RWPE1 (cell line): ENCODE measurements at regions of chr17 and their contacts with region 1.

Region 1: DNA sequence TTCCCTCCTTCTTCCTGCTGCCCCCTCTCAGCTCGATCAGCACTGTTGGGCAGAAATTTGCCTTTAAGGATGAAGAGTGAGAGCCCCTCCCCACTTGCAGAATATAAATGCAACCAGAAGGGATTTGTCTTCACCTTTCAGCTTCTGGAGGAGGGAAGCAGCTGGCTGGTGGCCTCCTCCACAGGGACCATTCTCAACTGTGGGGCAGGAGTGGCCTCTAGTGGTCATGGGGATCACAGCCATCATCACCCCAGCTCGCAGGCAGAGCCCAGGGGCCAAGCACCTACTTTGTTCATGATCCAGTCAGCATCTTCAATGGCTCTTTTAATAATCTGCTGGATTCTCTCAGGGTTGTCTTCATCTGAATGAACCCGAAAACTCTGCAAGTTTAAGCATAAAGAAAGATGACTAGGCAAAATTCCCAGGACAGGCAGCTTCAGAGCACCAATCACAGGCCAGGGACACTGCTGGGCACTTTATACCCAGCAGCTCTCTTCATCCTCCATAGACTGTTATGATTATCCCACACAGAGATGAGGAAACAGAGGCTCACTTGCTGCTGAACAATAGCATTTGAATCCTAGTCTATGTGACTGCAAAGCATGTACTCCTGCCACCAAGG is 13.1 kb downstream of the LYRM9 start:
- DNase-seq: peak; percentile 85
- H3K27ac ChIP-seq: no peak overlapping the region
- CTCF ChIP-seq: peak; percentile 82

Region 2: DNA sequence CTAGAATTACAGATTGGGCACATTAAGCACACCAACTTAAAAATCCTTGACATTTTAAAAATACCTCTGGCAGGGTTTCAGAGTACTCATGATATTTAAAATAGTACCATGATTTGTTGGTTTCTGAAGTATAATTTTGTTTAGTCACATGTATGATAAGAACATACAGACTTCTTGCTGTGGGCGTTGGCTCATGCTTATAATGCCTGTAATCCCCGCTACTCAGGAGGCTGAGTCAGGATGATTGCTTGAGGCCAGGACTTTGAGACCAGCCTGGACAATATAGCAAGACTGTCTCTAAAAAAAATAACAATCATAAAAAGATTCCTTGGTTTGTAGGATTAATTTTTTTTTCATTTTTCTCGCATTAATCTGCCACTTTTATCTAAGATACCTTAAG is 158.3 kb before region 1 on chr17:
- CTCF ChIA-PET with region 1: interaction called, 11 read pairs
- POLR2A ChIA-PET with region 1: no interaction called
- DNase-seq: no peak
- H3K27ac ChIP-seq: no peak overlapping the region
- CTCF ChIP-seq: no peak

Region 3: GRCh38 chr17:27760069-27760885 is 119.8 kb before region 1 on chr17:
- CTCF ChIA-PET with region 1: interaction called, 45 read pairs
- POLR2A ChIA-PET with region 1: no interaction called
- DNase-seq: peak; percentile 33
- H3K27ac ChIP-seq: no peak overlapping the region
- CTCF ChIP-seq: peak; percentile 90

Region 4: DNA sequence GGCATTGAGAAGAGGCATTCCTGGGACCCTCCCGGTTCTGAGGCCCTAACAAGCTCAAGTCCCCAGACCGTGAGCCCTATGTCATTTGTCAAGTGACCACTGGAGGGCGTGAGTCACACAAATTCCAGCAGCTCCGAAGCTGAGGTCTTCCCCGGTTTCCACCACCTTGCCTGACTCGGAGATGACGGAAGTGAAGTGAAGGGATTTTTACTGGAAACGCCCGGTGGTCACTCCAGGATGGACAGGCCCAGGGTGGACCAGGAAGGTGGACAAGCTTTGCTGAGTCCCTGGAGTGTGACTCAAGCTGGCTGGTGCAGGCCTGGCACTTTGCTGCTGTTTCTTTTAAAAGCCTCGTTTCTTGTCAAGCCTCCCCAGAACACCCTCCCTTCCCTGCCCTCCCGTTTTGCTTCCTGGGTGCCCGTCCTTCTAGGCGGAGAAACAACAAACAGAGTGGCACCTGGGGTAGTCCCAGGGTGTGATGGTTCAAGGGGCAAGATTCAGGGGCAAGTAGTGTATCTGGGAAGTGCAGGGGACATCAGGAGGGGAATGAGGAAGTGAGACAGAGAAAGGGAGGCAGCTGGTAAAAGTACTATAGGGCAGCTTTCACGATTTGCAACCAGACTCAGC is 74.5 kb before region 1 on chr17:
- CTCF ChIA-PET with region 1: interaction called, 103 read pairs
- POLR2A ChIA-PET with region 1: interaction called, 3 read pairs
- DNase-seq: peak; percentile 83
- H3K27ac ChIP-seq: no peak overlapping the region
- CTCF ChIP-seq: peak; percentile 78

Region 5: GRCh38 chr17:27818401-27819105 is 61.5 kb before region 1 on chr17:
- CTCF ChIA-PET with region 1: no interaction called
- POLR2A ChIA-PET with region 1: no interaction called
- DNase-seq: no peak
- H3K27ac ChIP-seq: no peak overlapping the region
- CTCF ChIP-seq: no peak

Region 6: DNA sequence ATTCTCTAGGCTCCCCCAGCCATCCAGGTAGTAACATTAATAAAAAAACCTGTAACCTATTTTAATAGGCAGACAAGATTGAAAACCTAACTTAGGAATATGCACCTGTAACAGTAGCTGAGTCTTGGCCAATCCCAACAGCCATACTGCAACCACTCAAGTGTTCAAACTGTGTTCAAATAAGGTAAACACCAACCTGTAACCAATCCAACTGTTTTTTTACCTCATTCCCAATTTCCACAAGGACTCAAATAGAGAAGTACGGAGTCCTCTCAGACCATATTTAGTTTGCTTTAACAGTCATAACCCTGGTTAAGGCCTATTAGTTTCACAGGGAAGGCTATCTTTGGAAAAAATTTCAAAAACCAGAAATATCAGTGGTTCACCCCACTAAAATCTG is 39.4 kb before region 1 on chr17:
- CTCF ChIA-PET with region 1: no interaction called
- POLR2A ChIA-PET with region 1: no interaction called
- DNase-seq: no peak
- H3K27ac ChIP-seq: no peak overlapping the region
- CTCF ChIP-seq: no peak

Region 7: DNA sequence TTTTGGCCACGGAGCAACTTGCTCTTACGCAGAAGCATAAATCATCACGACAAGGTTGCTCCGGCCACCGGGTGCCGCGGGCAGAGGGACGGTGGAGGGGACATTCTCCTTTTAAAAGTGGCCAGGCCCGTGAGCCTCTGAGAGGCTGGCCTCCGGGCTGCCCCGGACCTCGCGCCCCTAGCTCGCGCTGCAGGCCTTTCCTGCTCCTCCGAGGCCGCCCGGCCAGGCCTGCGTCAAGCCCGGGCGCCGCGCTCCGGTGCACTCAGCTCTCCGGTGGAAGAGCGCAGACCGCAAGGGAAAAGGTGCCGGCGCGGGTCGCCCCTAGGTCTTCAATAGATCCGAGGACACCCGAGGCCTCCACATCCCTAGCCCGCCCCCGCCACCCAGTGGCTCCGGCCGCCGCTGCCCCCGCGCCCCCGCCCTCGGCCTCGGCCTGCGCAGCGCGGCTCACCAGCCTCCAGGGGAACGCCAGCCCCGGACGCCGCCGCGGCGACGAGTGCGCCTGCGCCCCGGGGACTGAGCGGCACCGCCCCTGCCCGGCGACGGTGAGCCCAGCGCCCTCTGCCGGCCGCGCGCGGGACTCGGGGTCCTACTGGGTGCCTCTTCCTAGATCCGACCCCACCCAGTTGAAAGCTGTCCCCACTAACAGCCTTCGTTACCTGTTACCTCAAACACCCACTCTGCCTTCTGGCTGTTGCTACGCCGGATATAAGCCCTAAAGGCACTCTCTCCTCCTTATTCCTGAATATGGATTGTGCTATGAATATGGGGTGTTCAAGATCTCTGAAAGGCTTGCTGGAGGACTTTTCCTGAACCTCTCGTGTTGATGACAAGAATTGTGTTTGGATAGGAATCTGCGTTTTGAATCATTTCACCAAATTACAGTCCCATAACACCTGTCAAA is 13.0 kb after region 1 on chr17 and contains the start of gene LYRM9:
- CTCF ChIA-PET with region 1: interaction called, 22 read pairs
- POLR2A ChIA-PET with region 1: interaction called, 4 read pairs
- DNase-seq: peak; percentile 87
- H3K27ac ChIP-seq: peak within 1 kb of the TSS; percentile 65
- CTCF ChIP-seq: peak; percentile 97

Region 8: DNA sequence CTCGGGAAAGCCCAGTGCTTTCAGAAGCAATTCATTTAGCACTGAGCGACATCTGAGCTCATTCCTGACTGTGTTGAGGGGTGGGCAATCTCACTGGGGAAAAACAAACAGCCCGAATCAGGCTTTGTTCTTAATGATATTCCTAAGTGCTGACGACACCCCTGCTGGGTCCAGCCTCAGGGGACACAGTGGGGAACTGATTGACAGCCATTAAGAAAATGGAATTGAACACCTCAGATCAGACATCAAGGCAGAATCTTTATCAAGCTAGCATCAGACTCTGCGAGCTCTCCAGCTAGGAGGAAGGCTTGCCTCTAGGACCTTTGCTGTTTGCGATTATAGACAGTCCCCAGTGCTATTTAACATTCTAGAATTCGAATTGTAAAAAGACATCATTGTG is 35.6 kb after region 1 on chr17:
- CTCF ChIA-PET with region 1: no interaction called
- POLR2A ChIA-PET with region 1: no interaction called
- DNase-seq: no peak
- H3K27ac ChIP-seq: no peak overlapping the region
- CTCF ChIP-seq: no peak

Region 9: GRCh38 chr17:27944546-27945332 is 64.6 kb after region 1 on chr17:
- CTCF ChIA-PET with region 1: no interaction called
- POLR2A ChIA-PET with region 1: no interaction called
- DNase-seq: no peak
- H3K27ac ChIP-seq: no peak overlapping the region
- CTCF ChIP-seq: no peak